ENCODE measurements at regions of chr7 and their contacts with region 1.

Region 1: DNA sequence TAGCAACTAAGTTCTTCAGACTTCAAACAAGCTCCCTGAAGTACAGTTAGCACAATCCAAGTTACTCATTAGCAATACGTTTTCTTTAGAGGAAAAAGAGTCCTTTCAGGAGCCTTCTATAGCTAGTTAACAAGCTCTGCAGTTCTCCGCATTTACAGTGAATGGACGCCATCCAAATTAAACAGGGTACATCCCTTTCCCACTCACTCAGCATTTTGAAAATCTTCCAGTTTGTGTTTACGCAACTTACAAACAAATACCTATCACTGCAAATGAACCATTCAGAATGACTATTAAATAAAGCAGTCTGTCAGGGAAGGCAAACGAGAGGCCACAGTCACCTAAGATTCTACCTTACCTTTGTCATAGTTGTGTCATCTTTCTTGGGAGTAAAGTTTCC is 84.5 kb downstream of the RNF32 start:
- DNase-seq: peak; percentile 89
- ATAC-seq: peak; percentile 89
- H3K4me3 ChIP-seq: peak overlapping the region; percentile 10; the same call in 1 of the 2 replicates
- H3K27ac ChIP-seq: peak overlapping the region; percentile 55
- H3K4me1 ChIP-seq: peaks cover 20% of the 10 kb centered on the region
- H3K27me3 ChIP-seq: no peaks in the 10 kb centered on the region
- CTCF ChIP-seq: no peak

Region 2: DNA sequence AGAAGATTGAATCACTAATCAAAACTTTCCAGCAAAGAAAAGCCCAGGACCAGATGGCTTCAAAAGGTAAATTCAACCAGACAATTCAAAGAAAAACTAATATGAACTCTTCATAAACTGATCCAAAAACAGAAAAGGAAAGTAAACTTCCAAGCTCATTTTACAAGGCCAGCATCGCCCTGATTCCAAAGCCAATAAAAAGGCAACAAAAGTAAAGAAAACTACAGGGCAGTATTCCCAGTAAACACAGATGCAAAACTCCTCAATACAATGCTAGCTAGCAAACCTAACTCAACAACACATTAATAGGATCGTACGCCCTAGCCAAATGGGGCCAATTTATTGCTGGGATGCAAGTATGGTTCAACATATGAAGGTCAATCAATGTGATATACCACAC is 31.4 kb before region 1 on chr7:
- CTCF ChIA-PET with region 1: no interaction called
- POLR2A ChIA-PET with region 1: no interaction called
- intact Hi-C with region 1: loop called (anchors 2 kb)
- DNase-seq: no peak
- ATAC-seq: peak; percentile 57
- H3K4me3 ChIP-seq: no peak overlapping the region
- H3K27ac ChIP-seq: no peak overlapping the region
- H3K4me1 ChIP-seq: no peaks in the 10 kb centered on the region
- H3K27me3 ChIP-seq: no peaks in the 10 kb centered on the region
- CTCF ChIP-seq: no peak